PC-9 (cell line): ENCODE measurements at regions of chr5 and their contacts with region 1.

Region 1: GRCh38 chr5:136037001-136037705 is 8.4 kb downstream of the TGFBI start:
- DNase-seq: peak in 1 of 2 experiments; percentile 60
- H3K4me3 ChIP-seq: no peak overlapping the region
- H3K27ac ChIP-seq: no peak overlapping the region
- H3K4me1 ChIP-seq: peaks cover 34% of the 10 kb centered on the region
- H3K27me3 ChIP-seq: no peaks in the 10 kb centered on the region
- CTCF ChIP-seq: no peak

Region 2: DNA sequence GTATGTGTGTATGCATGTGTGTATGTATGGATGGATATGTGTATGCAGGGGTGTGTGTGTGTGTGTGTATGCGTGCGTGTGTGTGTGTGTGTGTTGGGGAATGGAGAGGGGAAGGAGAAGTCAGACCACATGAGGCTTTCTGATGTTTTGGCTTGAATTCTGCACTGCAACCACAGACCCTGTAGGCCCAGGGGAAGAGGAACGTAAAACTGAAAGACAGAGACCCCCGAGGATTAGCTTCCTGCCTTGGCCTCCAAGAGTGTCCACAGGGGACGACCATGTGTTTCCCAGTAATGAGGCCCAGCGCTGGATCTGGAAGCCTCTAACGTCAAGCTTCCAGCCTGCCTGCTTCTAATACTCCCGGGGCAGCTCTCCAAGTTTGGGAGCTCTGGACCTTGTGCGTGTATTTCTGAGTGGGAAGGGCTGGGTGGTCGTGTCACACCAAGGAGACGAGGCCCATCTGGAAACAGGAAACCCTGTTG is 595.8 kb before region 1 on chr5:
- CTCF ChIA-PET with region 1: no interaction called
- POLR2A ChIA-PET with region 1: interaction called, 17 read pairs
- intact Hi-C with region 1: no loop called
- DNase-seq: no peak
- H3K4me3 ChIP-seq: no peak overlapping the region
- H3K27ac ChIP-seq: no peak overlapping the region
- H3K4me1 ChIP-seq: no peaks in the 10 kb centered on the region
- H3K27me3 ChIP-seq: peaks cover 54% of the 10 kb centered on the region
- CTCF ChIP-seq: no peak